Activated CD4-positive, alpha-beta T cell treated with anti-CD3 and anti-CD28 coated beads, Interleukin-2, amount 10 ng/mL, durations not matched to agents 24 days and 14 days (primary cell): ENCODE measurements at regions of chr6 and their contacts with region 1.

Region 1: DNA sequence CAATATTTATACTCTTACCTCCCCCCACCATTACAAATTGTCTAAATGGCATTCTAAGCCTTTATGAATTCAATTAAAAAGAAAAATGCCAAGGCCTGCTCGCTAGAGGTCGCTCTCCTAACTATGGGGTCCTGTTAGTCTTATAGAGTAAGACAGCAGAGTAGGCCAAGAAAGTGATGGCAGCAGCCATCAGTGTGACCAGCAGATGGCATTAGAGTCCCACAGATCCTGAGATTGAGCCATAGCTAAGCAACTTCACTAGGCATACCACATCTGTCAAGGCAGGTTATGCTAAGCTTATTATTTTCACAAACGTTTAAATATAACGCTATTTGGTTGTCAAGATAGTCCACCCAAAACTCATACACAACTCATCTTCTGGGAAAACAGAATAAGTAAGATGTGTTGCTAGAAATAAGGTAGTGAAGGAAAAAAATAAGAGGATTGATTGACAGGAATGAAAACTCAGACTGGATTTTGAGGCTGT is 57.6 kb upstream of the SCAF8 start:
- DNase-seq: peak; percentile 96
- H3K4me3 Mint-ChIP-seq: no peak overlapping the region
- H3K27ac Mint-ChIP-seq: no peak overlapping the region
- H3K4me1 Mint-ChIP-seq: no peaks in the 10 kb centered on the region
- H3K27me3 Mint-ChIP-seq: peaks cover 2% of the 10 kb centered on the region

Region 2: GRCh38 chr6:154606457-154606856 is 69.2 kb before region 1 on chr6:
- intact Hi-C with region 1: loop called (anchors 5 kb)
- DNase-seq: peak; percentile 86
- H3K4me3 Mint-ChIP-seq: peak overlapping the region; percentile 57
- H3K27ac Mint-ChIP-seq: peak overlapping the region; percentile 82
- H3K4me1 Mint-ChIP-seq: peaks cover 34% of the 10 kb centered on the region
- H3K27me3 Mint-ChIP-seq: no peaks in the 10 kb centered on the region

Region 3: GRCh38 chr6:154805288-154805911 is 129.8 kb after region 1 on chr6:
- intact Hi-C with region 1: loop called (anchors 1 kb)
- DNase-seq: no peak
- H3K4me3 Mint-ChIP-seq: no peak overlapping the region
- H3K27ac Mint-ChIP-seq: no peak overlapping the region
- H3K4me1 Mint-ChIP-seq: peaks cover 4% of the 10 kb centered on the region
- H3K27me3 Mint-ChIP-seq: no peaks in the 10 kb centered on the region

Region 4: DNA sequence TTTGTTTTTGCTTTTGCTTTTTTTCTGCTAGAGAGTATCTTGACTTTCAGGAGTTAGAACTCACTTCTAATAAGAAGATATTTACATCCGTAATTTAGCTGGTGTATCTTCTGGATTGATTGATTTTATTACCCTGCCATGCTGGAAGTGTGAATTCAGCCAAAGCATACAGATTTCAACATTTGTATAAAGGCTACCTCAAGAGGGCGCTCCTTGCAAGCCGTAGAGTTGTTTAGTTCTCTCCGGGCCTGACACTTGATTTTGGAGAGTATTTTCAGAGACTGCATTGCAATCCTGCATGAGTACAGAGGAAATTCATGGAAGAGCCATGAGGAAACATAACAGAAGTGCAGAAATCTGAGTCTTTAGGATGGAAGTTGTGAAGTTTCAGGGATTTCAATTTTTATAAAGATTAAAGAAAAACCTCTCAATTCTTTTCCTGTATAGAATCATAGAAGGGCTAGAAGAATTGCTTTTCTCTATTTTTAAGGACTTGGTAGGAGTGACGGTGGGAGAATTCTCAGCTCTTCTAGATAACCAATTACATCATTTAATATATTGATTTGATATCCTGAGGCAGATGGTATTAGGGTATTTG is 252.8 kb after region 1 on chr6:
- intact Hi-C with region 1: loop called (anchors 1 kb)
- DNase-seq: peak; percentile 90
- H3K4me3 Mint-ChIP-seq: no peak overlapping the region
- H3K27ac Mint-ChIP-seq: peak overlapping the region; percentile 12
- H3K4me1 Mint-ChIP-seq: peaks cover 19% of the 10 kb centered on the region
- H3K27me3 Mint-ChIP-seq: no peaks in the 10 kb centered on the region

Region 5: DNA sequence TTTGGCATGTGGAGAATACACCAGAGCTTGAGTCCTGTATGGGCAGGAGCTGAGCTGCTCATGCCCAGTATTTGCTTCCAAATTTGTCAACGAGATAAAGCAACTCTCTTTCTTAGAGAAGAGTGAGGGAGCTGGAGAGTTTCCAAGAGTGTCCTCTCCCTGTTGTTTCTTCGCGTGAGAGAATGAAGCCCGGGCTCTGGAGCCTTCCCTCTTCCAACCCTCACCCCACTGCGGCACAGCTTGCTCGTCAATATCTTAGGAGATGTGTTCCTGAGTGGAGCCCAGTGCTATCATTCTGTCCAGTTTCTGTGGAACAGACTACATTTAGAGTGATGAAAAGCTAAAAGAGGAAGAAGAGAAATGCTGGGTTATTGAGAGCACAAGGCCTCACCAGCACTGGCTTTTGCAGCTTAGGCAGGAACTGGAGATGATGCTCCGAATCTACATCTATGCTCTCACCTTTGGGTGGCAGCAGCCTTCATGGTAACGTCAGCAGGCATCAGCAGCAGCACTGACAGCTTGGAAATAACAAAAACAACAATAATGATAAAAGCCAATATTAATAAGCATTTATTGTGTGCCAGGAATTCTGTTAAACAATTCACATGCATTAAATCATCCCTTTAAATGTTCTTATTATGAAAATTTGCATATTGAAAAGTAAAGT is 705.2 kb after region 1 on chr6:
- intact Hi-C with region 1: no loop called
- DNase-seq: no peak
- H3K4me3 Mint-ChIP-seq: no peak overlapping the region
- H3K27ac Mint-ChIP-seq: no peak overlapping the region
- H3K4me1 Mint-ChIP-seq: no peaks in the 10 kb centered on the region
- H3K27me3 Mint-ChIP-seq: no peaks in the 10 kb centered on the region

Region 6: GRCh38 chr6:155530219-155530834 is 854.7 kb after region 1 on chr6:
- intact Hi-C with region 1: loop called (anchors 5 kb)
- DNase-seq: peak; percentile 71
- H3K4me3 Mint-ChIP-seq: no peak overlapping the region
- H3K27ac Mint-ChIP-seq: no peak overlapping the region
- H3K4me1 Mint-ChIP-seq: peaks cover 10% of the 10 kb centered on the region
- H3K27me3 Mint-ChIP-seq: peaks cover 2% of the 10 kb centered on the region